RWPE1 (cell line): ENCODE measurements at regions of chr1 and their contacts with region 1.

Region 1: GRCh38 chr1:23062271-23062670 is 43.0 kb downstream of the KDM1A start:
- DNase-seq: no peak
- H3K27ac ChIP-seq: no peak overlapping the region
- CTCF ChIP-seq: no peak

Region 2: DNA sequence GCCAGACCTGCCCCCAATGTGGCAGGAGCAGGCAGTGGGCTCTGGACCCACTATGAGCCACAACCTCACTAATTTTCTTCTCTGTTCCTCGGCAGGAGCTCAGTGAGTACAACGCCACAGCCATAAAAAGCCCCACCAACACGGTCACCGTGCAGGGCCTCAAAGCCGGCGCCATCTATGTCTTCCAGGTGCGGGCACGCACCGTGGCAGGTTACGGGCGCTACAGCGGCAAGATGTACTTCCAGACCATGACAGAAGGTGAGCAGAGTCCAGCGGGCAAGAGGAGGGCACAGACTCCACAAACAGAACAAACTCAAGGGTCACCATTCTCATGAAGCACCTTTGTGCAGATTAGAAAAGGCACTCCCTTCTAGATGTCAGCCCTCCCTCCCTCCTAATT is 169.5 kb before region 1 on chr1:
- CTCF ChIA-PET with region 1: no interaction called
- POLR2A ChIA-PET with region 1: no interaction called
- DNase-seq: no peak
- H3K27ac ChIP-seq: no peak overlapping the region
- CTCF ChIP-seq: no peak

Region 3: GRCh38 chr1:23050201-23050600 is 12.1 kb before region 1 on chr1:
- CTCF ChIA-PET with region 1: interaction called, 10 read pairs
- POLR2A ChIA-PET with region 1: no interaction called
- DNase-seq: no peak
- H3K27ac ChIP-seq: no peak overlapping the region
- CTCF ChIP-seq: no peak

Region 4: GRCh38 chr1:23916209-23917131 is 854.2 kb after region 1 on chr1:
- CTCF ChIA-PET with region 1: no interaction called
- POLR2A ChIA-PET with region 1: no interaction called
- DNase-seq: peak; percentile 82
- H3K27ac ChIP-seq: no peak overlapping the region
- CTCF ChIP-seq: peak; percentile 47